Naive thymus-derived CD8-positive, alpha-beta T cell (primary cell): ENCODE measurements at regions of chr12 and their contacts with region 1.

Region 1: DNA sequence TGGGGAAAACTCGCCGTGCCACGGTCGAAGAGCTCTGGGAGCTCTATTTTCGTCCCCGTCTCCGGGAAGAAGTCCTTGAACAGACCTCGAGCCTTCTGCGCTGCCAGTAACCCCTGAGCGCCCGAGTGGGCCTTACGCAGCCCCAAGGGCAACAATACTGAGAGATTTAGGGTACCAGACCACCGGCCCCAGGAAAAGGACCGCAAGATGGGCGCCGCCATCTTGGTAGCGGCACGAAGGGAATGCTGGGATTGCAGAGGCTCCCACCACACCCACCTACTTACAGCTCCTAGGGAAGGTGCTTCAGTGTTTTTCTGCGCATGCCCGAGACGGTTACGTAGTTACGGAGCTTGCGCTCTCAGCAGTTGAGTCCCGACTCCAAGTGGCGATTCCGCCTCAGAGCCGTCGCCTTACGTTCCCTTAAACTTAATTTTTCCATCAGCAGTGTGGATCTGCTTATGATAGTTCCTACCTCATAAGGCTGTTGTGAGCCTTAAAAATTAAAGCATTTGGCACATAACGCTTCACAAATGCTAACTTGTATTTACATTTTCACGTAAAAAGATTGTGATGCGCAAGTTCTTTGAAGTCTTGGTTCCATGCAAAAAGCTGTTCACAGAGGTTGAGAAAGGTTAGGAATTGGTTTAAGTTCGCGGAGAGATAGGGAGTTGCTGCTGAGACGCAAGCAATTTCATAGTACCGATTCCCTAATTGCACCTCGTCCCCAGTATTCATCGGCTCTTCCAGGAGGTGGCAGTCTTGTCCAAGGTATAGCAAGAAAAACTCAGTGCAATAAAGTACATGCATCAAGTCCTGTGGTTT is at the start of gene YARS2:
- DNase-seq: peak; percentile 66 to 93 (median 84)
- ATAC-seq: peak; percentile 87 to 90
- H3K4me3 Mint-ChIP-seq: peak within 1 kb of the TSS; percentile 86 to 96 (median 92)
- H3K27ac Mint-ChIP-seq: peak within 1 kb of the TSS; percentile 85 to 98 (median 92)
- H3K4me1 Mint-ChIP-seq: peaks cover 5 to 26% (median 23%) of the 10 kb centered on the region in 4 donors
- H3K27me3 Mint-ChIP-seq: no peaks in the 10 kb centered on the region
- polyA plus RNA-seq, gene YARS2: 12.4 to 15.3 (median 14.5) TPM

Region 2: GRCh38 chr12:32679091-32679919 is 76.6 kb before region 1 on chr12 and contains the start of gene DNM1L:
- POLR2A ChIA-PET with region 1: interaction called, 13 read pairs
- DNase-seq: peak; percentile 87 to 94 (median 92)
- ATAC-seq: peak; percentile 97 to 98
- H3K4me3 Mint-ChIP-seq: peak within 1 kb of the TSS; percentile 84 to 95 (median 93)
- H3K27ac Mint-ChIP-seq: peak within 1 kb of the TSS; percentile 80 to 95 (median 94)
- H3K4me1 Mint-ChIP-seq: peaks cover 11 to 42% (median 24%) of the 10 kb centered on the region in 4 donors
- H3K27me3 Mint-ChIP-seq: no peaks in the 10 kb centered on the region
- polyA plus RNA-seq, gene DNM1L: 18.6 to 26.4 (median 21.5) TPM

Region 3: GRCh38 chr12:32698285-32698684 is 57.6 kb before region 1 on chr12:
- POLR2A ChIA-PET with region 1: no interaction called
- DNase-seq: no peak
- ATAC-seq: no peak
- H3K4me3 Mint-ChIP-seq: no peak overlapping the region
- H3K27ac Mint-ChIP-seq: peak overlapping the region in 1 of 10 donors; percentile 72
- H3K4me1 Mint-ChIP-seq: peaks cover 8 to 18% (median 14%) of the 10 kb centered on the region in 4 donors
- H3K27me3 Mint-ChIP-seq: no peaks in the 10 kb centered on the region

Region 4: DNA sequence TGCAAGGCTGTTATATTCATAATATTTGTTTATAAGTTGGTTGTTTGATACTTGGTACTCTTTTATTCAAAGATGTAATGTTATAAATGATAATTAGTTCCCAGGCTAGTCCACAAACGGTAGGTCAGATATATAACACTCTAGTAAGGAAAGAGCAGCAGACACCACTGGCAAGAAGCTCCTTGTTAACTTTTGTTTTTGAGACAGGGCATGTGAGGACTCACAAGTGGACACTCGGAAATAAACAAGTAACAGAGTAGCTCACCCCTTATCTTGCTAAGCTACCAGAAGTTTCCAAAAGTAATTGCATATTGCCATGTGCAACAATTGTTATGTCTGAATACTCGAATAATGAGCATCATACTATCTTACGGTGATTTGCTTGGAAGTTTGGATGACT is 38.4 kb after region 1 on chr12:
- POLR2A ChIA-PET with region 1: no interaction called
- DNase-seq: no peak
- ATAC-seq: no peak
- H3K4me3 Mint-ChIP-seq: no peak overlapping the region
- H3K27ac Mint-ChIP-seq: no peak overlapping the region
- H3K4me1 Mint-ChIP-seq: no peaks in the 10 kb centered on the region
- H3K27me3 Mint-ChIP-seq: peaks cover 0 to 10% (median 5%) of the 10 kb centered on the region in 5 donors

Region 5: DNA sequence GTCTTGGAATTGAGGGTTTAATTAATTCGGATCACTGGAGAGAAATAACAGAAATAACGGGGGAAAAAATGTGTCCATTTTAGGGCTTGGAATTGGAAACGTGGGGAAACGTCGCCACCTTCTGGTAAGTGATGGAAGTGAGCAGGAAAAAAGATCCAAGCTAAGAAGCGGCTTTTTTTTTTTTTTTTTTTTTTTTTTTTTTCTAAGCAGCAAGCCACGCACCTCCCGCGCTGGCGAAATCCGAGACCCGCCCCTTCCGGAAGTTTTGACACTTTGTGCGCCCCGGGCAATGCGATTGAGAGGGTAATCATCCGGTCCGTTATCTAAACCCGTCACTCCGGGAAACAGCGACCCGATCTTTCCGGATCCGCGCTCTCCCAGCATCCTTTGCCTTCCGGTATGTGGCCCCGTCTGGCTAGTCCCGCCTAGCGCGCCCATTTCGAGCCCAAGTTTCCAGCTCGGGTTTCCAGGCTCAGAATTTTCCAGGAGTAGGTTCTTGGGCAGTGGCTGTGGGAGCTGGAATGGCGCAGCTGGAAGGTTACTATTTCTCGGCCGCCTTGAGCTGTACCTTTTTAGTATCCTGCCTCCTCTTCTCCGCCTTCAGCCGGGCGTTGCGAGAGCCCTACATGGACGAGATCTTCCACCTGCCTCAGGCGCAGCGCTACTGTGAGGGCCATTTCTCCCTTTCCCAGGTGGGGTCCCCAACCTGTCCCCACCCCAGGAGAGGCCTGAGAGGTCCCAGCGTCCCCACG is 1266.4 kb after region 1 on chr12 and contains the start of gene ALG10:
- POLR2A ChIA-PET with region 1: interaction called, 72 read pairs
- DNase-seq: peak; percentile 80 to 98 (median 96)
- ATAC-seq: peak; percentile 97 to 99
- H3K4me3 Mint-ChIP-seq: peak within 1 kb of the TSS; percentile 91 to 98 (median 96)
- H3K27ac Mint-ChIP-seq: peak within 1 kb of the TSS; percentile 92 to 99 (median 99)
- H3K4me1 Mint-ChIP-seq: peaks cover 5 to 29% (median 24%) of the 10 kb centered on the region in 4 donors
- H3K27me3 Mint-ChIP-seq: peaks cover 0 to 2% (median 0%) of the 10 kb centered on the region in 5 donors
- polyA plus RNA-seq, gene ALG10: 2.9 to 4.0 (median 3.1) TPM